Activated naive CD4-positive, alpha-beta T cell treated with anti-CD3 and anti-CD28 coated beads, Interleukin-2, amount 10 ng/mL, durations not matched to agents 7 days and 5 days (primary cell): ENCODE measurements at regions of chr9 and their contacts with region 1.

Region 1: DNA sequence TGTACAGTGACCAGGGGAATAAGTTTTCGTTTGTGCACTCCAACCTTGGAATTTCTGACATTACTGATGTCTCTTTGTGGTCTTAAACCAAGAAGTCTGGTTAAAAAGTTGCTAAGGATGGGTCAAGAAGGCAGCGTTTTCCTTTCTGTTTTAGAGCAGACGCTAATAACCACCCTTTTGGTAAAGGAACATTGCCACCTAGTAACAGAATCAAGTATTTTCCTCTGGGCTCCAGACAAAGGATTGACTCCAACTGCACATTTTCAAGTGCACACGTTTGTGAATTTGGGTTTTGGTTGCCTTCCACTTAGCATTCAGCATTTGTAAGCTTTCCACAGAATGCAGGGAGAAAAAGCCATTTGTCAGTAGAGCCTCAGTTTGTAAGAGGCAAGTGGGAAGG is 22.2 kb upstream of the CEP78 start:
- DNase-seq: no peak
- H3K4me3 Mint-ChIP-seq: no peak overlapping the region
- H3K27ac Mint-ChIP-seq: no peak overlapping the region
- H3K4me1 Mint-ChIP-seq: peaks cover 40% of the 10 kb centered on the region
- H3K27me3 Mint-ChIP-seq: no peaks in the 10 kb centered on the region

Region 2: GRCh38 chr9:77977210-77977611 is 236.5 kb before region 1 on chr9:
- CTCF ChIA-PET with region 1: interaction called, 21 read pairs
- DNase-seq: peak; percentile 75
- H3K4me3 Mint-ChIP-seq: no peak overlapping the region
- H3K27ac Mint-ChIP-seq: peak overlapping the region; percentile 26
- H3K4me1 Mint-ChIP-seq: peaks cover 54% of the 10 kb centered on the region
- H3K27me3 Mint-ChIP-seq: no peaks in the 10 kb centered on the region

Region 3: DNA sequence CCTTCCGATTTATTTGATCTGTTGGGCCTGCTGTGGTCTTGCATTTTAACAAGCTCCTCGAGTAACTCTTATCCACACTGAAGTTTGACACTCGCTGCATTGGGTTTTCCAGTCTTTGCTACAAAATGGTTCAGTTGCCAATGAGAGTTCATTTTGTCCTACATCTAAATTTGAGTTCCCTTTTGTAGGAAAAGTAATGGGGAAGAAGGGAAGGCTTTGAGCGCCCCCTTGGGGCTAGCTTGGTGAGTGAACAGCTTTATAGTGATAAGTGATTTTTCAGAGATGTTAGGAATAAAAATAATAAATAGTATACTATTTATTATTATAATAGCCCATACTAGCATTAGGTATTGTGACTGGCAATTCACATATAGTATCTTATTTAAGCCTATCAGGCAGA is 92.2 kb before region 1 on chr9:
- CTCF ChIA-PET with region 1: interaction called, 19 read pairs
- DNase-seq: peak; percentile 67
- H3K4me3 Mint-ChIP-seq: no peak overlapping the region
- H3K27ac Mint-ChIP-seq: no peak overlapping the region
- H3K4me1 Mint-ChIP-seq: peaks cover 38% of the 10 kb centered on the region
- H3K27me3 Mint-ChIP-seq: peaks cover 13% of the 10 kb centered on the region

Region 4: GRCh38 chr9:78144663-78145377 is 68.9 kb before region 1 on chr9:
- CTCF ChIA-PET with region 1: no interaction called
- DNase-seq: no peak
- H3K4me3 Mint-ChIP-seq: no peak overlapping the region
- H3K27ac Mint-ChIP-seq: no peak overlapping the region
- H3K4me1 Mint-ChIP-seq: no peaks in the 10 kb centered on the region
- H3K27me3 Mint-ChIP-seq: peaks cover under 1% of the 10 kb centered on the region

Region 5: DNA sequence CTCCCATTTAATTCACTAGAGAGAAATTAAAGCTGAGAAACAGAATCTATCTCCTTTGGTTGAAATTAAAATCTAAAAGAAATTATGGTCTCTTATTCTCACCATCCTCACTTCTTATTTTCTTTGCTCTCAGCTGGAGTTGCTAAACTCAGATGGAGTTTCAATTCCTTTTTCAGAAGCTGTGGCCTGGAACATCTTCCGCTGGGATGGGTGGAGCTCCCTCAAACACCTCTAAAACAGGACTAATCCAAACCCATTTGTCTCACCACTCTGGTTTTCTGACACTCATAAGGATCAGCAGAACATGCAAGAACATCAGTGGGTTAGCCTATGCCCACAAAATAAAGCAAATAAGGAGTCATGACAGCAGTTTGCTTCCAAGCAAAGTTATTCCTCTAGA is 17.5 kb before region 1 on chr9:
- CTCF ChIA-PET with region 1: interaction called, 11 read pairs
- DNase-seq: no peak
- H3K4me3 Mint-ChIP-seq: no peak overlapping the region
- H3K27ac Mint-ChIP-seq: no peak overlapping the region
- H3K4me1 Mint-ChIP-seq: peaks cover 20% of the 10 kb centered on the region
- H3K27me3 Mint-ChIP-seq: peaks cover 8% of the 10 kb centered on the region

Region 6: GRCh38 chr9:78424299-78424698 is 210.6 kb after region 1 on chr9:
- CTCF ChIA-PET with region 1: no interaction called
- DNase-seq: no peak
- H3K4me3 Mint-ChIP-seq: no peak overlapping the region
- H3K27ac Mint-ChIP-seq: no peak overlapping the region
- H3K4me1 Mint-ChIP-seq: peaks cover 7% of the 10 kb centered on the region
- H3K27me3 Mint-ChIP-seq: peaks cover 7% of the 10 kb centered on the region